ENCODE measurements at regions of chr1 and their contacts with region 1.

Region 1: DNA sequence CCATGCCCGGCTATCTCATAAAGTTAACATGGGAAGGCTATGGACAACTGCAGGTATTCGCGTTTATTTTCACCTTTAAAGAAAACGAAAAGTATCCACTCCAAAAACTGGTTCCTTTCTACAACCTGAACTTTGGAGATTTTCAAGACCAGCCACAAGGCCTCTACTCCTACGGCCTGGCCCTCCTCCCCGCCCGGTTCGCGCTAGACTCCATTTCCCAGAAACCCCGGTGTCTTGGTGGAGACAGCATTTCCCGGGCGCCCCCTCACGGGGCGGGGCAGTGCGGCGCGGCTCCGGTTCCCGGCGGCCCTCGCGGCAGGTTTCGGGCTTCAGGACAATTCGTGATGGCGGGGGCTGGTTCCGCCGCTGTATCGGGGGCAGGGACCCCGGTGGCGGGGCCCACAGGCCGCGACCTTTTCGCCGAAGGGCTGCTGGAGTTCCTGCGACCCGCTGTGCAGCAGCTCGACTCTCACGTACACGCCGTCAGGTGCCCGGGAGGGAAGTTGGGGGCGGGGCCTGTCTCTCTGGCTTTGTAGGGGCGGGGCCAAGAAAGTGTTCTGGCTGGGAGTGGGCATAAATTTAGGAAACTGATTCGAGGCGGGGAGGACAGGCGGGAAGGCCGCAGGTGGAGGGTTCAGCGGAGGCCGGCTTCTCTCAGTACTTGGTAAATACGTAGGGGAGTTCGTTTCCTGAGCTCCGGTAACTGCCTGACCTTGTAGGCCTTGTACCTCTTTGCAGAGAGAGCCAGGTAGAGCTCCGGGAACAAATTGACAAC is at the start of gene SNAPIN:
- DNase-seq: peak; percentile 95
- ATAC-seq: peak; percentile 98
- H3K4me3 Mint-ChIP-seq: peak within 1 kb of the TSS; percentile 83
- H3K27ac Mint-ChIP-seq: peak within 1 kb of the TSS; percentile 87
- H3K4me1 Mint-ChIP-seq: peaks cover 14% of the 10 kb centered on the region
- H3K27me3 Mint-ChIP-seq: no peaks in the 10 kb centered on the region
- total RNA-seq, gene SNAPIN: 30.7 to 34.2 TPM

Region 2: DNA sequence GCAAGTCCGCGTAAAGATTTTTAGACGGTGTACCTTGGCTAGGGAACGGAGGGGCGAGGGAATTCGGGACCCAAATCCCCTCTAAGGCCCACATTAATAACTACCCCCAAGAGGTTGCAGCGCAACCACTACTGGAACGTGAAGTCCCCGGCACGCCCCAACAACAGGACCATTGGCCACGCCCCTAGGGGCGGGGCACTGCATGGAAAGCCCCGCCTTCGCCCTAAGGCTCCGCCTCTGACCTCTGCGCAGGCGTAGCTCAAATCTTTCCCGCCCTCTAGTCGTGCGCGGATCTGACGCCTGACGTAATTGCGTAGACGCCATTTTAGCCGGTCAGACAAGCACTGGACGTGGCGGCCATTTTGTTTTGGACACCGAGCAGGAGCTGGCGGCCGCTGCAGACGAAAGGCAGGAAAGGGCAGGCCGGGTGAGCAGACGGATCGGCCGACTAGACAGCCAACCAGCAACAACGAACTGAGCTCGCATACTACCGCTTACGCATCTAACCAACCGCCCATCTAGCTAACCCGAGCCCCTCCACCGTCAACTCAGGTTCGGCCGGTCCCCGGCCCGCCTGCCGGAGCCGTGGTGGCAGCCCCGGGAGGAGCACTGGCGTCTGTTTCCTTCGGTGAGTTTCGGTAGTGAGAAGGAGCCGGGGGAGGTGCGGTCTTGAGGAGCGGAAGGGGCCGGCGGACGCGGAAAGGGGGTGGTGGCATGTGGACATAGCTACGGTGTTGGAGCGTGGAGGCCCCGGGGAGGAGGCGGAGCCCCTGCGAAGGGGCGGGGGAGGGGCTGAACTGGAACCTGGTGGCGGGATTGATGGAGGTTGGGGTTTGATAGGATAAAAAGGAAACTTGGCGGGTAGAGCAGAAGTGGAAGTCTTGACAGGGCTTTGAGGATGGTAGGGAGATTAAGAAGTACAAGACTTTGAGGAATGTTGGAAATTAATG is 24.6 kb before region 1 on chr1 and contains the start of gene CHTOP:
- CTCF ChIA-PET with region 1: no interaction called
- DNase-seq: peak; percentile 99
- ATAC-seq: peak; percentile 92
- H3K4me3 Mint-ChIP-seq: peak within 1 kb of the TSS; percentile 99
- H3K27ac Mint-ChIP-seq: peak within 1 kb of the TSS; percentile 100
- H3K4me1 Mint-ChIP-seq: peaks cover 42% of the 10 kb centered on the region
- H3K27me3 Mint-ChIP-seq: no peaks in the 10 kb centered on the region
- total RNA-seq, gene CHTOP: 83.8 to 89.1 TPM

Region 3: GRCh38 chr1:153670859-153671627 is 12.5 kb after region 1 on chr1 and contains the start of gene ILF2:
- CTCF ChIA-PET with region 1: interaction called, 13 read pairs
- DNase-seq: peak; percentile 99
- ATAC-seq: peak; percentile 91
- H3K4me3 Mint-ChIP-seq: no peak within 1 kb of the TSS
- H3K27ac Mint-ChIP-seq: no peak within 1 kb of the TSS
- H3K4me1 Mint-ChIP-seq: peaks cover 34% of the 10 kb centered on the region
- H3K27me3 Mint-ChIP-seq: no peaks in the 10 kb centered on the region
- total RNA-seq, gene ILF2: 193 to 260 TPM

Region 4: GRCh38 chr1:153683854-153684253 is 25.3 kb after region 1 on chr1:
- CTCF ChIA-PET with region 1: no interaction called
- DNase-seq: no peak
- ATAC-seq: no peak
- H3K4me3 Mint-ChIP-seq: no peak overlapping the region
- H3K27ac Mint-ChIP-seq: no peak overlapping the region
- H3K4me1 Mint-ChIP-seq: peaks cover 4% of the 10 kb centered on the region
- H3K27me3 Mint-ChIP-seq: peaks cover 54% of the 10 kb centered on the region

Measured in activated CD8-positive, alpha-beta memory T cell treated with anti-CD3 and anti-CD28 coated beads, Interleukin-2, amount 10 ng/mL, durations not matched to agents 7 days and 5 days (primary cell).